Activated naive CD4-positive, alpha-beta T cell treated with anti-CD3 and anti-CD28 coated beads, Interleukin-2, amount 10 ng/mL, durations not matched to agents 7 days and 5 days (primary cell): ENCODE measurements at regions of chr3 and their contacts with region 1.

Region 1: DNA sequence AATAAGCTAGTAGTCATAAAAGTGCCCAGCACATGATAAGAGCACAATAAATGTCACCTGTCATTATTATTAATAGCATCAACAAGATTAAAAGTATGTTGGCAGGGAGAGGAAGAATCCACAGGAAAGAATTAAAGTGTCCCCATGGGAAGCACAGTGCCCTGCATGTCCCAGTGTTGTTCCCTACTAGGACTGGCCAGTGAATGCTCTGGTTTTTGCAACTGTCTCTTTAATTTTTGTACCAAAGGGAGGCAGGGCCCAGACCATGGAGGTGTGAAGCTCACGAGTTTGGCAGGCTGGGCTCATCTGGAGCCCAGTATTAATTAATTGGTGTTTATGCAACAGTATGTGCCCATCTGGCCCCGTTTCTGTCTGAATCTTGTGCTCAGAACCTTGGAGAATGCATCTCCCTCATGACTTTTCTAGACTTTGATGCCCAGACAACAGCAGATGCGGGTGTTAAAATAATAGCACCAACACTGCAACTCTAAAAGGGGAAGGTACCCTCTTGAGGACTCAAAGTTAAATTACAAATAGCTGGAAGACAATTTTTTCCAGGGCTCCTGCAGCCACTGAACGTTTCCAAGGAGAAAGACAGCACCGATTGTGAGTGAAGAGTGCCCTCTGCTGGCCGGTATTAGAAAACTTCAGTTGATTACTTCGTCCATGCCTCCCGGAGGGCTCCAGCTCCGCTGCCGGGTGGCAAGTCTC is 71.9 kb upstream of the SPATA12 start:
- DNase-seq: peak; percentile 79
- H3K4me3 Mint-ChIP-seq: no peak overlapping the region
- H3K27ac Mint-ChIP-seq: no peak overlapping the region
- H3K4me1 Mint-ChIP-seq: peaks cover 27% of the 10 kb centered on the region
- H3K27me3 Mint-ChIP-seq: peaks cover 27% of the 10 kb centered on the region

Region 2: DNA sequence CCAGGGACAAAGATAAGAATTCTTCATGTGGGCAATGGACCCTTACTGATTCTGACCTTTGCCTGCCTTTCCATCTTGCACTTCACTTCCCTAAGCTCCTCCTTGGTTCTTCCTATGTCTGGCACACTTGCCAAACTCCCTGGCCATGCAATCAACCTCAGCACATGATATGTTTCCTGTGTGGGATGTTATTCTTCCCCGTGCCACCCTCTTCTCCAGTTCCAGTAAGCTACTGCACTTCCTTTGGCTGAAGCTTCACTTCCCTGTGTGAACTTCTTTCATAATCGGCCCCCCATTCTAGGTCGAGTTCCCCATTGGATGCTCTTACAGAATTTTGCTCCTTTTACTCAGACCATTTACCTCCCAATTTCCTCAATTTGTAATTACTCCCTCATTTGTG is 294.9 kb before region 1 on chr3:
- CTCF ChIA-PET with region 1: interaction called, 25 read pairs
- DNase-seq: no peak
- H3K4me3 Mint-ChIP-seq: no peak overlapping the region
- H3K27ac Mint-ChIP-seq: no peak overlapping the region
- H3K4me1 Mint-ChIP-seq: peaks cover 46% of the 10 kb centered on the region
- H3K27me3 Mint-ChIP-seq: no peaks in the 10 kb centered on the region

Region 3: GRCh38 chr3:56819016-56819809 is 169.4 kb before region 1 on chr3:
- CTCF ChIA-PET with region 1: interaction called, 15 read pairs
- DNase-seq: no peak
- H3K4me3 Mint-ChIP-seq: no peak overlapping the region
- H3K27ac Mint-ChIP-seq: no peak overlapping the region
- H3K4me1 Mint-ChIP-seq: peaks cover 55% of the 10 kb centered on the region
- H3K27me3 Mint-ChIP-seq: no peaks in the 10 kb centered on the region

Region 4: DNA sequence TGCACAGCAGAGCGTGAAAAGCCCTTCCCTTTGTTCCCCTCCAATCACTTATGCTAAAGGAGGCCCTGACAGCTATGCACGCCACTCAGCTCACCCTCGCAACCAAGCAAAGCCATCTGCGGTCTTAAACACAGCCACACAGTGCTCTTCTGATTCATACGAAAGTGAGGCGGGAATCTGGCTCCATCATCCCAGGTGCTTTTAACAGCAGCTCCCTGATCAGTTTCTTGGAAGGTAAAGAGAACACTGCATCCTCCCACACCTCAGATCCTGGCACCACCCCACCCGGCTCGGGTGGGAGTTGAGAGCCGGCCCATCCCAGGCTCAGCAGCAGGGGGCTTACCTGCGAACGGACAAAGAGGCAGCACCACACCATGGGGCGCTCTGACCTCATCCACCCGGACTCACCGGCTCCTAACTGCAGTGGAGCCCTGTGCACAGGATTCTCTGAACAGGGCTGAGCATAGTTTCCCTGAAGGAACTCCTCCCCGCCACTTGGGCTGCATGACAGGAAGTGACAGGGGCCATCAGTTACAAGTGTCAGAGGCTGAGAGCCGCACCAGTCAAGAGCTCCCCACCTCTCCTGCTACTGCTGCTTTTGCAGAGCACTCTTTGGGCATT is 72.5 kb before region 1 on chr3:
- CTCF ChIA-PET with region 1: interaction called, 37 read pairs
- DNase-seq: peak; percentile 88
- H3K4me3 Mint-ChIP-seq: peak overlapping the region; percentile 98
- H3K27ac Mint-ChIP-seq: peak overlapping the region; percentile 100
- H3K4me1 Mint-ChIP-seq: peaks cover 72% of the 10 kb centered on the region
- H3K27me3 Mint-ChIP-seq: no peaks in the 10 kb centered on the region

Region 5: DNA sequence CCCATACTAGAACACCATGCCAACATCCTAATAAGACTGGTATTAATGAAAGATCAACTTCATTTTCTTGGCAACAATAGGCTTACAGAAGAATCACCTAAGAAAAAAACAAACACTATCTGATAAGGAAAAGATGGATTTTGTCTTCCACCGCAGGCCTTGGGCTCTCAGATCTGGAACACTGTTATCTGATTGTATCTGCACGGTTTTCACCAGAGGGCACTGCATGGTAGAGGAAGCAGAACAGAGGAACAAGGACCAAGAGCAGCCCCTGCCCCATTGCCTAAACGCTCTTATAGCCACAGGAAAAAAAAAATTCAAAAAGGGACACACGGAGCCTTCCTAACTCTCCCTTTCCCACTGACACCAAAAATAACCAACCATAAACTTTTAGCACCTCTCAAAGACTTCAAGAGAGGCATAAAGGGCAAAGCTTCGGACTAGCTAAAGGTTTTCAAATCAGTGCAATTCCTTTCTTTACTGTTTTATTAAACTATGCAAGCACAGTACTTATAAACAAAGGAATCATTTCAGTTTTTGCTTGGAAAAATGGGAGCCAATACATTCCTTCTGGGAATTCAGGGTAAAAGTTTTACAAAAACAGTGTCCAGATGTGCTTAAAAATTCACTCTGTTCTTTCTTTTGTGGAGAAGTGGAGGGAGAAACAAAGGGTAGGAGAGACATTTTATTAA is 153.3 kb after region 1 on chr3:
- CTCF ChIA-PET with region 1: no interaction called
- DNase-seq: no peak
- H3K4me3 Mint-ChIP-seq: no peak overlapping the region
- H3K27ac Mint-ChIP-seq: no peak overlapping the region
- H3K4me1 Mint-ChIP-seq: no peaks in the 10 kb centered on the region
- H3K27me3 Mint-ChIP-seq: peaks cover 70% of the 10 kb centered on the region